ENCODE measurements at regions of chr6 and their contacts with region 1.

Region 1: DNA sequence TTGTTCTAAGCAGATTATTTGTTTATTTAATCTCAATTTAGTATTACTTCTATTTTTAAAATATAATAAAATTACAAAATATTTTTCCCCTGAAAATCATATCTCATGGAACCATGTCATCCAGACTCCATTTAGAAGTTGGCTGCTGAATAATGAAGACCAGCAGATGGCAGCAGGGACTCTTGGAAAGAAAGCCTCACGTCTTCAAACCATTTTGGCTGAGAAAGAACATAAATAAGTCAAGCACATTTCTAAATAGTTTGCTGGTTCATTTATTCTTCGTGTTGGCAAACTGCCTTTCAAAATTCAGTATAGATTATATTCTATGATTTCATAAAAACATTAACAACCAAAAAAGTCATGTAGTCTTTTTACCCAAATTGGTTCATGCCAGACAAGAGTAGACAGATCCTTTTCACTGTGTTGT is 71.7 kb downstream of the RCAN2 start:
- DNase-seq: peak; percentile 30 to 62
- ATAC-seq: peak; percentile 63 to 68
- H3K4me3 ChIP-seq: no peak overlapping the region
- H3K27ac ChIP-seq: peak overlapping the region in 3 of 4 donors; percentile 9 to 65 (median 54)
- H3K4me1 ChIP-seq: peaks cover 4 to 35% of the 10 kb centered on the region in 2 donors
- H3K27me3 ChIP-seq: no peaks in the 10 kb centered on the region
- CTCF ChIP-seq: peak; percentile 69 to 84 (median 78)
- POLR2A ChIP-seq: no peak

Region 2: DNA sequence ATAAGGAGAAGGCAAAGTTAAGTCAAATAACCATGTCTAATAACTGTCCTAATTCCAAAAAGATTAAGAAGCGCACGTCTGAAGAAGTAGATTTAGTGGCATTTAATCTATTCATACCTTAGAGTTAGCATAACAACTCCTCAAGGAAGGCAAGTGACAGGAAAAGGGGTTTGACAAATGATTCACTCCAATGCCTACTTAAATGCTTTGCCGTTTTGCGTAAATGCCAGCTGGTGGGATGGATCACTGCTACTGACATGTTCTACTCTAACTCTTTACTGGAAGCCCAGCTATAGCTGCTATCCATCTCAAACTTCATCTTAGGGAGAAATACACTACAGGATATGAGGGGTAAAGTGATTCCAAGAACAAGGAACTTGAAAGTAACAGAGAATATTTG is 1438.7 kb before region 1 on chr6:
- in situ Hi-C with region 1: no loop called
- intact Hi-C with region 1: no loop called
- DNase-seq: no peak
- ATAC-seq: no peak
- H3K4me3 ChIP-seq: no peak overlapping the region
- H3K27ac ChIP-seq: no peak overlapping the region
- H3K4me1 ChIP-seq: no peaks in the 10 kb centered on the region
- H3K27me3 ChIP-seq: no peaks in the 10 kb centered on the region
- CTCF ChIP-seq: no peak
- POLR2A ChIP-seq: no peak

Region 3: DNA sequence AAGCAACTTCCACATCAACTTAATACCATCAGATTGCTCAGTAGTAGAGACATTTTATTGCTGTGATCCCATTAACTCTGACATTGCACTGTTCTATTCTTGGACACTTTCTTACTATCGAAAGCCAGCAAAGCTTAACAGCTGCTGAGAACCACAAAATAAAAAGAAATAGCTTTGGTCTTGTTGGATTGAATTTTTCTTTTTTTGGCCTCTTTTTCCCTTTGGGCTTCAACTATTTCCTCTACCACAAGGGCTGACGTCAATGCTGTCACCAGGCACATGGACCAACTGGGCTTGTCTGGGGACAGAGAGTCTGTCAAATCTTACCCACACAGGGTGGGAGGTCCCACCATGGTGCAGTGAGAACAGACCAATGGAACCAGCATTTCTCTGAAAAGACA is 185.4 kb before region 1 on chr6:
- in situ Hi-C with region 1: loop called in 1 of 4 experiments (anchors 25 kb)
- intact Hi-C with region 1: no loop called
- DNase-seq: peak in 1 of 2 donors; percentile 41
- ATAC-seq: peak; percentile 51 to 53
- H3K4me3 ChIP-seq: no peak overlapping the region
- H3K27ac ChIP-seq: peak overlapping the region; percentile 35 to 69 (median 58)
- H3K4me1 ChIP-seq: peaks cover 23 to 53% of the 10 kb centered on the region in 2 donors
- H3K27me3 ChIP-seq: no peaks in the 10 kb centered on the region
- CTCF ChIP-seq: no peak
- POLR2A ChIP-seq: no peak

Region 4: GRCh38 chr6:46626228-46626909 is 206.8 kb after region 1 on chr6:
- in situ Hi-C with region 1: loop called (anchors 5 to 10 kb)
- intact Hi-C with region 1: loop called (anchors 1 kb)
- DNase-seq: no peak
- ATAC-seq: peak; percentile 62 to 73
- H3K4me3 ChIP-seq: no peak overlapping the region
- H3K27ac ChIP-seq: no peak overlapping the region
- H3K4me1 ChIP-seq: peaks cover 6% of the 10 kb centered on the region in 2 donors
- H3K27me3 ChIP-seq: no peaks in the 10 kb centered on the region
- CTCF ChIP-seq: peak; percentile 53 to 75 (median 63)
- POLR2A ChIP-seq: no peak

Region 5: DNA sequence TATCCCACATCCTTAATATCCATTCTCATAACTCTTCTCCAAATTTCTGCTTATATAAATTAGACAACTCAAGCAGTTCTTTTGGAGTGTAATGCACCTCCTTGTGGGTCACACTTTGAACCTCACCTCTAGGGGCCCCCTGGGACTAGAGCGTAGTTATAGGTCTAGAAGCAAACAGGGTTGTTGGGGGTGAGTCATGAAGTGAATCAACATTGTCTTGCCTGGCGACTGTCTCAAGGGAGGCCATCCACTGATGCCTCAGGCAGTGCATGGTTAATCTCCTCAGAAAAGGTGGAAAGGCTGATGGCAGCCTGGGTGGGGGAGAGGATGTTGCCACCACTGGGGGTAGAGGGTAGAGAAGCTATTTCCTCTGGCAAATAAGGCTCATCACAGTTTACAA is 761.0 kb after region 1 on chr6:
- in situ Hi-C with region 1: no loop called
- intact Hi-C with region 1: no loop called
- DNase-seq: no peak
- ATAC-seq: no peak
- H3K4me3 ChIP-seq: no peak overlapping the region
- H3K27ac ChIP-seq: no peak overlapping the region
- H3K4me1 ChIP-seq: no peaks in the 10 kb centered on the region
- H3K27me3 ChIP-seq: no peaks in the 10 kb centered on the region
- CTCF ChIP-seq: no peak
- POLR2A ChIP-seq: no peak

Measured in gastrocnemius medialis (tissue), 4 donors.